ENCODE measurements at regions of chr3 and their contacts with region 1.

Region 1: DNA sequence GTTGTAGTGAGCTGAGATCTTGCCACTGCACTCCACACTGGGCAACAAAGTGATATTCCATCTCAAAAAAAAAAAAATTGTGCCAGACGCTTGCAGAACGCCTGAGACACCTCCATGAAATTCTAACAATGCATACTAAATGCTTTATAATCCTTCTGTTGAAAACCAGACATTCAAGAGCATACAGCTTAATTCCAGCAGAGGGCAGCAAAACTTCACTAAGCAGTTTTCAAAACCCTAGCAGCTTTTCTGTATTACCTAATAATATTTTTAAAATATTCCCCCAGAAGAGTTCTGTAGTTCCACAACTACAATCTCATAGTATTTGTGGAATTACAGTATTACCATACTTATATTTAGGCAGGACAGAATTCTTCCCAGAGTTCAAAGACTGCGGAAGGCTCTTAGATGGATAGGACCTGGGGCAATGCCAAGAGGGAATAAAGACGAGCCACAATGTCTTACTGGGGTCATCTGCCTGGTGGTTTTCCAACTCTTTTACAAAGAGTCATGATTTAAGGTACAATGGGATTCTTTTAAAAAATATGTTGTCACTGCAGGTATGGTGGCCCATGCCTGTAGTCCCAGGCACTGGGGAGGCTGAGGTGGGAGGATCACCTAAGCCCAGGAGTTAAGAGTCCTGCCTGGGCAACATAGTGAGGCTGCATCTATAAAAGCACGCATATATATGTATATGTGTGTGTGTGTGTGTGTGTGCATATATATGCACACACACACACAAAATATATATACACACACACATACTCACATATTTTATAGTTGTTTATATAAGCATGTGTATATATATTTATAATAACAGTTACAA is 19.6 kb upstream of the TASOR start:
- DNase-seq: peak; percentile 21 to 42
- H3K4me3 ChIP-seq: no peak overlapping the region
- H3K27ac ChIP-seq: no peak overlapping the region
- H3K4me1 ChIP-seq: no peaks in the 10 kb centered on the region
- H3K27me3 ChIP-seq: no peaks in the 10 kb centered on the region
- CTCF ChIP-seq: peak; percentile 57 to 93 (median 78)
- POLR2A ChIP-seq: no peak

Region 2: GRCh38 chr3:56801662-56802377 is 99.1 kb after region 1 on chr3 and contains the start of gene ARHGEF3:
- intact Hi-C with region 1: loop called (anchors 2 kb)
- DNase-seq: peak; percentile 82 to 84
- H3K4me3 ChIP-seq: peak within 1 kb of the TSS; percentile 21 to 93 (median 58)
- H3K27ac ChIP-seq: peak within 1 kb of the TSS; percentile 51 to 69 (median 60)
- H3K4me1 ChIP-seq: peaks cover 22 to 24% of the 10 kb centered on the region in 2 donors
- H3K27me3 ChIP-seq: no peaks in the 10 kb centered on the region
- CTCF ChIP-seq: peak in 4 of 6 experiments; percentile 30 to 38 (median 34)
- POLR2A ChIP-seq: peak; percentile 72 to 95
- total RNA-seq, gene ARHGEF3: 15.7 to 20.8 (median 18.8) TPM

Region 3: DNA sequence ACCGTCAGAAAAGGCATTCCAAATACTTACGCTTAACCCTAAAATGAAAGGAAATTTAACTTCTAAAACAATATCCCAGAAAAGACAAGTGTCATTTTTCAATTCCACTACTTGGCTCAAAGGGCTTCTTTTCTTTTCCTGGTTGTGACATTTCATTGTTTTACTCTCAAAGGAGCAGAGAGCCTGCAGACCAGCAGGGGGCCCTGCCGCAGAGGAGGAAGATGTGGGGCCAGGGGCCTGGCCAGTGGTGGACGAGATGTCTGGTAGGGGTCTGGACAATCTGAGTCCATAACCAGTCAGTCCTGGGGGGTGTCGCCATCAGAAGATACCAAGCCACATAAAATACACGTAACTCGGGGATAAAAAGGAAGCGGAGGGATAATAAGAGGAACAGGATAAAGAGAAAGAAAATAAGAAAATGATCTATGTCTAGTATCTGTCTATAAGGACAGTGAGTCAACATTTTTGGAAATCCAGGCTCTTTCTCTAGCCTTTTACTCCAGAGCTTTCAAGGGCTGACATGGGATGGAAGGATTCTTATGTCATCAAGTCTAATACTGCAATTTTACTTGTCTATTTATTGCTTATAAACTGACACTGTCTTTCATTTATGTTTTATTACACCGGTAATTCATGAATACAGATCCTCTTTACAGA is 153.3 kb after region 1 on chr3:
- intact Hi-C with region 1: no loop called
- DNase-seq: peak; percentile 10 to 15
- H3K4me3 ChIP-seq: no peak overlapping the region
- H3K27ac ChIP-seq: no peak overlapping the region
- H3K4me1 ChIP-seq: peaks cover 0 to 3% of the 10 kb centered on the region in 2 donors
- H3K27me3 ChIP-seq: no peaks in the 10 kb centered on the region
- CTCF ChIP-seq: peak in 3 of 6 experiments; percentile 15 to 46 (median 37)
- POLR2A ChIP-seq: no peak

Region 4: GRCh38 chr3:56988458-56989168 is 285.9 kb after region 1 on chr3:
- intact Hi-C with region 1: loop called (anchors 2 kb)
- DNase-seq: peak; percentile 80 to 85
- H3K4me3 ChIP-seq: no peak overlapping the region
- H3K27ac ChIP-seq: no peak overlapping the region
- H3K4me1 ChIP-seq: peaks cover 22 to 41% of the 10 kb centered on the region in 2 donors
- H3K27me3 ChIP-seq: no peaks in the 10 kb centered on the region
- CTCF ChIP-seq: peak; percentile 74 to 93 (median 80)
- POLR2A ChIP-seq: no peak